Posterior vena cava (tissue), 2 donors: ENCODE measurements at regions of chr18 and their contacts with region 1.

Region 1: DNA sequence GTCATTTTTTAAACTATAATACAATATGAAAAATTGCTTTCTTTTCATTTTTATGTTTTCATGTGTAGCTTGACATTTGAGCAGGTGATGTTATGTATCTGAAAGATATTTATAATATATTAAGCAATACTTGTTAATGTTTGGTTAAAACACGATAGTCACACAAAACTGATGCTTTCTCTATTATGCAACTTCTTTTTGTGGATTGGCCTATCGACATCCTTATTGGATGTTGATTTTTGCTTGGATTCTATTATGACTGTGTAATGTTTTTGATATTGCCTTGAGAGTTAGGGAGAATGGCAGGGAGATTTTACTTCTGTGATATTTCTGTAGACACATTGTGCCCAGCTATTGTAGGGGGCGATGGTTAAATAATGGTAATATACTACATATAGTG is 128.0 kb downstream of the ZNF407 start:
- DNase-seq: no peak

Region 2: DNA sequence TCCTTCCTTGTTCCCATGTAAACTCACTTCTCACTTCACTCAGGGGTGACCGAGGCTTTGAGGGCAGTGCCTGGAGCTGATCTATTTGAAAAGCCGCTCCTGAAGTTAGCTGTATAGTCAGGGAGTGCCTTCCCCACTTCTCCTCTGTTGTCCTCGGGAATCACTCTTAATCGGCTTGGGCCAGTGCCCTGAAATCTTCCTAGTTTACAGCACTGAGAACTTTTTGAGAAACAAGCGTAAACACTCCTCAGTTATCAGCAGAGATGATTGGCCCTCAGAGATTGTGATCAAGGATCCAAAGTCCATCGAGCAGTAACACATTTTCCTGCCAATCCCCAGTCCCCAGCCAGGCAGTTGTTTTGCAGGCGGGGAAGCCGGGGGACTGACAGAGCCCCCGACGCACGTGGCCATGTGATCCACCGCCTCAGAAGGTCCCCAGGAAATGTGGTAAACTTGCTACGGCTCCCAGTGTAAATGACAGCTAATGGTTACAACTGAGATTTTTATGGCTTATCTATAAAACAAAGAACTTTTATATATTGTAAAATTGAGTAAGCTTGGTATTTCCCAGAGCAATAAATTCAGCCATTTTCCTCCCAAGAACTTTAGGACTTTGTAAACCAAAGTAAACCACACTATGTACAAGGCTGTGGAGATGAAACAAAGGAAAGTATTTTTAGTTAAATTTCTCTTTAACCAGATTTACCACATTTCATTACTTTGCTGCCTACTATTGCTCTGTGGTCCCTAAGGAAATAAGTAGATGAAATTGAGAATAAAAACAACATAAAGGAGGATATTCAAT is 356.6 kb before region 1 on chr18:
- intact Hi-C with region 1: no loop called
- DNase-seq: no peak

Region 3: DNA sequence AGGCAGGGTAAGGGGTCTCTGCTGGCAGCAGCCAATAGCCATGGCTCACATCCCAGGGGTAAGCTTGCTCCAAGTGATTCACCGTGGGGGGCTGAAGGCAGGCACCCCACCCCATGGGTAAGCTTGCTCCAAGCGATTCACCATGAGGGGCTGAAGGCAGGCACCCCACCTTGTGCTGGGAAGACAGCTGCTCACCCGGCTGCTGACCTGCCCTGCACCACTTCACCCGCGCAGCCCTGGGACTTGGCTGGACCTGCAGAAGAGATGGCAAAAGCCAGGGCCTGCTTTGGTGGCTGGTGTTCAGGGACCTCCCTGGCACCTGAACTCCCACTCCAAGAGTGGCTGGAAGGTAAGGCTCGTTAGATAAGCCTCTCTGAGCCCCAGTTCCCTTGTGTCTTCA is 464.0 kb after region 1 on chr18:
- intact Hi-C with region 1: loop called in 1 of 2 experiments (anchors 2 kb)
- DNase-seq: no peak